Calu3 (cell line): ENCODE measurements at regions of chr20 and their contacts with region 1.

Region 1: GRCh38 chr20:50267041-50267865 is 76.6 kb downstream of the CEBPB start:
- DNase-seq: peak; percentile 99
- H3K4me3 Mint-ChIP-seq: peak overlapping the region; percentile 17
- H3K27ac Mint-ChIP-seq: peak overlapping the region; percentile 85
- H3K4me1 Mint-ChIP-seq: peaks cover 51% of the 10 kb centered on the region
- H3K27me3 Mint-ChIP-seq: no peaks in the 10 kb centered on the region
- CTCF ChIP-seq: no peak

Region 2: DNA sequence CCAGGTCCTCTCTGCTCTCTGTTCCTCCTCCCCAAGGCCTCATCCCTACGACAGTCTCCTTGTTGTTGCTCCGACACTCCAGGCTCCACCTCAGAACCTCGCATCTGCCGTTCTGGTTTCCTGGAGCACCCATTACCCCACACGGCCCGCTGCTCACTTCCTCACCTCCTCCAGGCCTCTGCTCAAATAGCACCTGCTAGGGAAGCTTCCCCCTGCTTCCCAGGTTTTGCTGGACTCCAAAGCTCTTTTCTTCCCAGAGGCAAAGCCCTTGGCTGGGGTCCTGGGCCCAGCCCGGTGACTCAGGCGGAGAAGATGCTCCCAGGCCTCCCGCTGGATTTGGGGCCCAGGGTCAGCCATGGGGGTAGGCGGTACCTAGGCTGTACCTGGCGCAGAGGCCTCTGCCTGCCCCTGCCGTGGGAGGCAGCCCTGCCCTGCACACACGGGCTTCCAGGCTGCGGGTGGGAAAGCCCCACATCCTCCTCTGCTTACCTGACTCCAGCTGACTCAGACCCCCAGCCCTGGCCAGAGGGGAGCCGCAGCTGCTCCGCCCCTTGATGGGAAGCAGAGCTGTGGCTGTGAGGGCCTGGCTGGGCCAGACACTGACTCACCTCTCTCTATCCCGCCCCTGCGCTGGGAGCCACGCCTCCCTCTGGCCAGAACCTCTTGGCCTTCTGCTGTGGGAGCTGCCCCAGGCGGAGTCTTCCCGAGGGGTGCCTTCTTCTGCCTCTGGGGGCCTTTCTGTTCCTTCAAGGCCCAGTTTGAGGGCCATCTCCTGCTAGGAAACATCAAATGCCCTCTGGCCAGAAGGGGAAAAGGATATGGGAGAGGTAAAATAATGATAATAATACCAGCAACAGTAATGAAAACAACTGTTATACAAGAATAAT is 53.9 kb after region 1 on chr20:
- CTCF ChIA-PET with region 1: interaction called, 10 read pairs
- intact Hi-C with region 1: no loop called
- DNase-seq: peak; percentile 98
- H3K4me3 Mint-ChIP-seq: peak overlapping the region; percentile 73
- H3K27ac Mint-ChIP-seq: peak overlapping the region; percentile 87
- H3K4me1 Mint-ChIP-seq: peaks cover 26% of the 10 kb centered on the region
- H3K27me3 Mint-ChIP-seq: no peaks in the 10 kb centered on the region
- CTCF ChIP-seq: no peak

Region 3: GRCh38 chr20:50421356-50422277 is 154.4 kb after region 1 on chr20:
- CTCF ChIA-PET with region 1: interaction called, 11 read pairs
- intact Hi-C with region 1: no loop called
- DNase-seq: no peak
- H3K4me3 Mint-ChIP-seq: peak overlapping the region; percentile 9
- H3K27ac Mint-ChIP-seq: peak overlapping the region; percentile 86
- H3K4me1 Mint-ChIP-seq: peaks cover 42% of the 10 kb centered on the region
- H3K27me3 Mint-ChIP-seq: no peaks in the 10 kb centered on the region
- CTCF ChIP-seq: no peak